ENCODE measurements at regions of chr1 and their contacts with region 1.

Region 1: GRCh38 chr1:17027403-17027802 is 15.7 kb upstream of the ATP13A2 start:
- DNase-seq: peak; percentile 41 to 73 (median 62)
- ATAC-seq: peak; percentile 56
- H3K4me3 ChIP-seq: no peak overlapping the region
- H3K27ac ChIP-seq: peak overlapping the region; percentile 69 to 88 (median 80)
- H3K4me1 ChIP-seq: peaks cover 52% of the 10 kb centered on the region
- H3K27me3 ChIP-seq: no peaks in the 10 kb centered on the region
- CTCF ChIP-seq: no peak
- POLR2A ChIP-seq: peak in 2 of 3 donors; percentile 33 to 45

Region 2: DNA sequence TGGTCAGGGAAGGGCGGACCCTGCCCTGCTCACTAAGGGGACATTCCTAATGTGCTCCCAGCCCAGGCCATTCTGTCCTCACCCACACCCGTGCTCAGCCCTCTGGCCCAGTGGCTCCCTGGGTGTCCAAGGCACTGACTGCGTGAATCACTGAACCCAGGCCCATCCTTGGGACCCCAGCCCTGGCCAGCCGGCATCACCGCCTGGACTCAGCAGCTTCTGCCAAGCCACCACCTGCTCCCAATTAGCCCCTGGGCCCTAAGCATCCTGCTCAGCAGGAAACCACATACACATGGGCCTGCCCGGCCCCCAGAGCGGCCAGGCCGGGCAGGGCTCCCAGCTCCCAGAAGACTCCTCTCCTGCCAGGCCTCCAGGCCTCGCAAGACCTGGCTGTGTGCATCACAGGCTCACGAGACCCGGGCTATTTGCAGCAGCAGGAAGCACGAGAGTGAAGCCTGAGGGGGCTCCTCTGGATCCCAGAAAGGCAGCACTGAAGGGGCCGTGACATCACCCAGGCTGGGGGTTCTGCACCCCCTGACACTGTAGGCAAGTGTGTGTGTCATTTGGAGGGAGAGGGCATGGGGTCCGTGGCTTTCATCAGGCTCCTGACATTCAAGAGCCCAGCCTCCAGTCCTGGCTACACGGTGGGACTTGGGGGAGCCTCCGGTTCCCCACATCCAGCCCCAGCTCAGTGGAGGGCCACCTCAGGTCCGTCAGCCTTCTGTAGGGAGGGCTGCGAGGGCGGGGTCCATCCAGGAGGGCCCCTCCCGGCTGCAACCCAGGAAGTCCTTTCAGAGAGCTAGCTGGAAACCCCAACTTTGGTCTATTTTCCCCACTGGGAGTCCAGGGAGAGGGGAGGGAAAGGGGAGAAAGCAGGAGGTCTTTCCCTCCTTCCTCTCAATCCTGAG is 48.6 kb before region 1 on chr1:
- intact Hi-C with region 1: loop called (anchors 10 kb)
- DNase-seq: peak in 3 of 4 donors; percentile 13 to 45 (median 28)
- ATAC-seq: no peak
- H3K4me3 ChIP-seq: no peak overlapping the region
- H3K27ac ChIP-seq: no peak overlapping the region
- H3K4me1 ChIP-seq: peaks cover 6% of the 10 kb centered on the region
- H3K27me3 ChIP-seq: no peaks in the 10 kb centered on the region
- CTCF ChIP-seq: no peak
- POLR2A ChIP-seq: no peak

Region 3: GRCh38 chr1:17307946-17308345 is 280.5 kb after region 1 on chr1 and contains the start of gene PADI4:
- intact Hi-C with region 1: no loop called
- DNase-seq: peak in 1 of 4 donors; percentile 7
- ATAC-seq: no peak
- H3K4me3 ChIP-seq: no peak within 1 kb of the TSS
- H3K27ac ChIP-seq: no peak within 1 kb of the TSS
- H3K4me1 ChIP-seq: no peaks in the 10 kb centered on the region
- H3K27me3 ChIP-seq: no peaks in the 10 kb centered on the region
- CTCF ChIP-seq: no peak
- POLR2A ChIP-seq: no peak
- total RNA-seq, gene PADI4: not detected

Measured in body of pancreas (tissue), 4 donors.